Endothelial cell of umbilical vein (primary cell): ENCODE measurements at regions of chr2 and their contacts with region 1.

Region 1: GRCh38 chr2:11239666-11240462 is 84.6 kb downstream of the SLC66A3 start:
- DNase-seq: peak; percentile 50
- H3K4me3 ChIP-seq: no peak overlapping the region
- H3K27ac ChIP-seq: peak overlapping the region; percentile 10
- H3K4me1 ChIP-seq: peaks cover 4% of the 10 kb centered on the region
- H3K27me3 ChIP-seq: no peaks in the 10 kb centered on the region
- CTCF ChIP-seq: no peak
- POLR2A ChIP-seq: no peak

Region 2: GRCh38 chr2:10584796-10585475 is 654.9 kb before region 1 on chr2:
- CTCF ChIA-PET with region 1: no interaction called
- POLR2A ChIA-PET with region 1: no interaction called
- dilution Hi-C with region 1: no loop called
- intact Hi-C with region 1: no loop called
- DNase-seq: no peak
- H3K4me3 ChIP-seq: no peak overlapping the region
- H3K27ac ChIP-seq: no peak overlapping the region
- H3K4me1 ChIP-seq: peaks cover 16% of the 10 kb centered on the region
- H3K27me3 ChIP-seq: no peaks in the 10 kb centered on the region
- CTCF ChIP-seq: no peak
- POLR2A ChIP-seq: no peak

Region 3: GRCh38 chr2:11292464-11293255 is 52.8 kb after region 1 on chr2:
- CTCF ChIA-PET with region 1: interaction called, 7 read pairs
- POLR2A ChIA-PET with region 1: no interaction called
- dilution Hi-C with region 1: no loop called
- intact Hi-C with region 1: loop called (anchors 5 kb)
- DNase-seq: peak; percentile 93
- H3K4me3 ChIP-seq: no peak overlapping the region
- H3K27ac ChIP-seq: peak overlapping the region; percentile 73
- H3K4me1 ChIP-seq: peaks cover 32% of the 10 kb centered on the region
- H3K27me3 ChIP-seq: no peaks in the 10 kb centered on the region
- CTCF ChIP-seq: no peak
- POLR2A ChIP-seq: no peak